Calu3 (cell line): ENCODE measurements at regions of chr5 and their contacts with region 1.

Region 1: DNA sequence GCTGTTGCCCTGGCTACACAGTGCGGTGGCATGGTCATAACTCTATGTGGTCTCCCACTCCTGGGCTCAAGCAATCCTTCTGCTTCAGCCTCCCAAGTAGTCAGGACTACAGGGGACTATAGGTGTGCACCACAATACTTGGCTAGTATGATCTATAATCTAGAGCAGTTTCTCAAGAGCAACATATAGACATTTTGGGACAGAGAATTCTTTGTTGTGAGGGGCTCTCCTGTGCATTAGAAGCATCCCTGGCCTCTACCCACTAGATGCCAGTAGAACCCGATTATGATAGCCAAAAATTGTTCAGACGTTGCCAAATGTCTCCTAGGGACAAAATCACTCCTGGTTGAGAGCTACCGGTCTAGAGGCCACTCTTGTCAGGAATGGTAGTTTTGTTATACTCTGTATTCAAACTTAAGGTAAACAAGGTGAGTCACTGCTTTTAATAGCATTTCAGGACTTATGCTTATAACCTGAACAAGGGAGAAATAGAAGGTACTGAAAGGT is 7.2 kb downstream of the ANKHD1 start:
- DNase-seq: peak; percentile 12
- H3K4me3 Mint-ChIP-seq: no peak overlapping the region
- H3K27ac Mint-ChIP-seq: peak overlapping the region; percentile 42
- H3K4me1 Mint-ChIP-seq: peaks cover 24% of the 10 kb centered on the region
- H3K27me3 Mint-ChIP-seq: no peaks in the 10 kb centered on the region
- CTCF ChIP-seq: no peak

Region 2: GRCh38 chr5:140420226-140420570 is 11.4 kb after region 1 on chr5:
- CTCF ChIA-PET with region 1: no interaction called
- intact Hi-C with region 1: loop called (anchors 1 kb)
- DNase-seq: no peak
- H3K4me3 Mint-ChIP-seq: no peak overlapping the region
- H3K27ac Mint-ChIP-seq: no peak overlapping the region
- H3K4me1 Mint-ChIP-seq: peaks cover 13% of the 10 kb centered on the region
- H3K27me3 Mint-ChIP-seq: no peaks in the 10 kb centered on the region
- CTCF ChIP-seq: no peak